ENCODE measurements at regions of chr9 and their contacts with region 1.

Region 1: GRCh38 chr9:16653491-16654399 is 216.7 kb downstream of the BNC2 start:
- DNase-seq: no peak

Region 2: DNA sequence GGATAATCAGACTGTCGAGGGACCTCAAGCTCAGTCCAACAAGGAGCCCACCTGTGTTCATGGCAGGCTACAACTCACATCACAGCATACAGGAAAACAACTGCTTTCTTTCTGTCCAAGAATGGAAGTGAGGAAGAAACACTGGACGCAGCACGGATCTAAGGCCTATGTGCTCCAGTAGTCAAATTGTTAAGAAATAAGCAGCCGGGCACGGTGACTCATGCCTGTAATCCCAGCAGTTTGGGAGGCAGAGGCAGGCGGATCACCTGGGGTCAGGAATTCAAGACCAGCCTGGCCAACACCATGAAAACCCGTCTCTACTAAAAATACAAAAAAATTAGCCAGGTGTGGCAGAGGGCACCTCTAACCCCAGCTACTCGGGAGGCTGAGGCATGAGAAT is 211.1 kb before region 1 on chr9:
- intact Hi-C with region 1: no loop called
- DNase-seq: no peak

Region 3: GRCh38 chr9:16458696-16459420 is 194.9 kb before region 1 on chr9:
- intact Hi-C with region 1: no loop called
- DNase-seq: no peak

Region 4: DNA sequence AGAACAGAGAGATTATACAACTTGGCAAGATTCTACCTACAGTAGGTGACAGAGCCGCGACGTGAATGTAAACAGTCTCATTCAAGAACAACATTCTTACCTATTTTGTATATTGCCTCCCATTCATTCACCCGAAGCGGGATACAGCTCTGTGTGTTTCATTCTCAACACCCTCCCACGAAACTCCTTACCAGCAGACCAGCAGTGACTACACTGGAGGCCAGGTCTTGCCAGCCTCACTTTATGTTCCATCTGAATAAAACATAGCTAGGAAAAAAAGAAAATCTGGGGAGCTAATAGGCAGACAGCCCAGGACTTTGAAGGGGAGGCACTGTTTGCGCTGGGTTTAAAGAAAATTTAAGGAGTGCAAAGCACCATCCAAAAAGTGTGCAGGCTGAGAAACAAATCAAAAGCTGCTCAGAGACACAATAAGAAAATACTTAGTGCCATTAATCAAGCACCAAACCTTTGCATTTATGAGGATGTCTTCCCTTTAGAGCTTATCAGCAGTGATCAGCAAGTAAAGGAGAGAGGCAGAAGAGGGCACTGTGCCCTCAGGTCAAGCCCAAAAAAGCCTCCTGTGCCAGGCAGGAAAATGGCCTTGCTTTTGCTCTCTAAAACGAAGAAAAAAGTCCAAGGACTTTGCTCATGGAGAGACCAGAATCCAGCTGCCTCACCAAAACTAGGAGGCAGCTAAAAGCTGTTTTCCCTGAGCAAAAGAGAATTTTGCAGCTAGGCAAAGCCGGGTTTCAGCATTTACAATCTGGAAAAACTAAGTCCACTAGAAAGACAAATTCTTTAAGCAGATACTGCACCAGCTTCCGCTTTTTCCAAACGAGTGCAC is 78.4 kb before region 1 on chr9:
- intact Hi-C with region 1: loop called (anchors 10 kb)
- DNase-seq: no peak